ENCODE measurements at regions of chr17 and their contacts with region 1.

Region 1: DNA sequence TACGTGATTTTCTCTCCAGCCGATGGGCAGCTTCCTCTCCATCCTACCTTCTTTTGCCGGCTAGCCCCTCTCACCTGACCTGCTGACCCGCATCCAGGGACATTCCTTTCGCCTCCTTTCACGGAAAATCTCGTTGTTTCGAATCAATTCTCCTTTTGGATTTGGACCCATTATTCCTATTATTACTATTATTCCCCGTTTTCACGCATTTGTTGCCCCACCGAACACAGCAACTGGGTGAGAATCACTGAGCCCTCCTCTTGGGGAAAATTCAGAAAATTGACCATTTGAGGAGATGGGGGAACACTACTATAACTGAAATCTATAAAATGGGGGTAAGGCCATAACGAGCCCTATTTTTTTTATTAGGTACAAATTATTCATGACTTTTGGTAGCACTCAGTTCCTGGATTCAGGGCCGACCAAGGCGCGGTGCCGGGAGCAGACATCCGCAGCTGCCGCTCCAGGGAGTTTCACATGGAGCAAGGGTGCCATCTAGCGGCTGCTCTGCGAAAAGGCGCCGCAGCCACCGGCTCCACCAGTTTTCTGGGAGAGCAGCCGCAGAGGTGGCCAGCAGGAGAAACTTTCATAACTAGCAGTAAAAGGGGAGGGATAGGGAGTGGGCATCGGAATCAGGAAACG is 3.3 kb upstream of the HOXB8 start:
- DNase-seq: peak; percentile 91
- ATAC-seq: peak; percentile 69
- H3K4me3 Mint-ChIP-seq: no peak overlapping the region
- H3K27ac Mint-ChIP-seq: no peak overlapping the region
- H3K4me1 Mint-ChIP-seq: peaks cover 36% of the 10 kb centered on the region
- H3K27me3 Mint-ChIP-seq: peaks cover 82% of the 10 kb centered on the region

Region 2: DNA sequence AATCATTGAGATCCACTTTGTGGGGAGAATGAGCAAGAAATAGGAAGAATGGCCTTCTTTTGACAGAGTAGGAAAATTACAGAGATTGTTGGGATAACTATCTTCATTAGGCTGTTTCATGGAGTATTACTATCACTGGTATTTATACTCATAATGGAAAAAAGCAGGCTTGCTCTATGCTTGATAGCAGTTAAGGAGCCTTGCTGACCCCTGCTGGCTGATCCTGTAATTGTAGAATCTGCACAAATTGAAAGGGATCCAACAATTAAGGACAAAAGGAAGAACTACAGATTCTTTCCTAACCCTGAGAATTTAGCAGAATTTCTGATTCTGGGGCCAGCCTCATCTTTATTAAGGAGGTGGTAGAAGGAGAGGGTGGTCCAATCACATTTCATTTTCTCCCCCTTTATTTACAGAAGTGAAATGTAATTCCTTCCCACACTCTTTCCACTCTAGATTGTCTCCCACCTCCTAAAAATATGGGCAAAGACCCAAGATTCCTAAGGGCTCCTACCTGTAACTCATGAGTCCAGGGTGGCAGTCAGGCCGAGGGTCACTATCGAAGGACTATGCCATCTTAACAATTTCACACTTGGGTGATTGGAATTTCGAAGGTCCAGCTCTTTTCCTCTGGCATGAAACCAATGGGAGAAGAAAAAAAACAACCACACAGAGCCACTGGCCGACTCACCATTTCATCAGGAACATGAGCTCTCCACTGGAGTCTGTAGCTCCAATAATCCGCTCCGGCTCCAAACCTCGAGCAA is 543.9 kb before region 1 on chr17:
- CTCF ChIA-PET with region 1: no interaction called
- POLR2A ChIA-PET with region 1: no interaction called
- intact Hi-C with region 1: loop called in 1 of 2 experiments (anchors 2 kb)
- DNase-seq: peak; percentile 86
- ATAC-seq: peak; percentile 75
- H3K4me3 Mint-ChIP-seq: no peak overlapping the region
- H3K27ac Mint-ChIP-seq: no peak overlapping the region
- H3K4me1 Mint-ChIP-seq: no peaks in the 10 kb centered on the region
- H3K27me3 Mint-ChIP-seq: no peaks in the 10 kb centered on the region

Region 3: GRCh38 chr17:48131216-48131824 is 487.1 kb before region 1 on chr17:
- CTCF ChIA-PET with region 1: no interaction called
- POLR2A ChIA-PET with region 1: no interaction called
- intact Hi-C with region 1: loop called (anchors 5 to 10 kb)
- DNase-seq: peak; percentile 68
- ATAC-seq: peak; percentile 85
- H3K4me3 Mint-ChIP-seq: no peak overlapping the region
- H3K27ac Mint-ChIP-seq: peak overlapping the region; percentile 2
- H3K4me1 Mint-ChIP-seq: no peaks in the 10 kb centered on the region
- H3K27me3 Mint-ChIP-seq: no peaks in the 10 kb centered on the region

Region 4: GRCh38 chr17:48530208-48530886 is 88.0 kb before region 1 on chr17:
- CTCF ChIA-PET with region 1: no interaction called
- POLR2A ChIA-PET with region 1: no interaction called
- intact Hi-C with region 1: no loop called
- DNase-seq: no peak
- ATAC-seq: no peak
- H3K4me3 Mint-ChIP-seq: no peak overlapping the region
- H3K27ac Mint-ChIP-seq: no peak overlapping the region
- H3K4me1 Mint-ChIP-seq: no peaks in the 10 kb centered on the region
- H3K27me3 Mint-ChIP-seq: peaks cover 19% of the 10 kb centered on the region

Region 5: DNA sequence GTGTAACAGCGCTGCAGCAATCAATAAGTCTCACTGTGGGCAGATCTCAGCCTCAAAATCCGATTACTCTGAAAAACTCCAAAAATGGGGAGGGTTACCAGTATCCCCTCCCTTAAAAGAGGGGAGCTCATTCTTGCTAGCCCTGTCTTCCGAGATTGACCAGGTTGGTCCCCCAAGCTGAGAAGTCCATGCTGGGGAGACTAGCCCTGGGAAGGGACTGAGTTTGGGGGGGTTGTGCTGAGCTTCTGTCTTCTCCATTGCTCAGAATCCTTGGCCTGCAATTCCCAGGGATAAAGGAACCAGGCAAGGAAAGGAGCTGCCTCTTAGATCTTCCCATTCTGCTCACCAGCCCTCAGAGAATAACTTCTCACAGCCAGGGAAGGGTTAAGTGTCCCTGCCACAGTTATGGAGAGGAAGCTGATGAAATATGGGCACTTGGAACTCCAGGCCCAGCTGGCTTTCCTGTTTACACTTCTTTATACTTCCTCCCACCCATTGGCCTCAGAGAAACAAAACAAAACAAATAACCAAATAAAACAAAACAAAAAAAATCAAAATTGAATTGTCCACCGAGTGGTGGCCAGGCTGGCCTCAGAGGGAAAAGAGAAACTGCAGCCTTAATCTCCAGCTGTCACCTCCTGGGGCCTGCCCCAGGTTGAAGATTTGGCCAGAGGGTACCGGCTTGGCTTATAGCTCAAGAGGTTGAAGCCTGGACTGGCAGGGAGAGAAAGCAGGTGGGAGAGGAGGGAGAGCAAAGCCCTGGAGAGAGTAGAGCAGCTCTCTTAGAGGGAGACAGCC is 30.9 kb before region 1 on chr17:
- CTCF ChIA-PET with region 1: interaction called, 27 read pairs
- POLR2A ChIA-PET with region 1: no interaction called
- intact Hi-C with region 1: no loop called
- DNase-seq: no peak
- ATAC-seq: no peak
- H3K4me3 Mint-ChIP-seq: no peak overlapping the region
- H3K27ac Mint-ChIP-seq: no peak overlapping the region
- H3K4me1 Mint-ChIP-seq: peaks cover 30% of the 10 kb centered on the region
- H3K27me3 Mint-ChIP-seq: peaks cover 89% of the 10 kb centered on the region

Region 6: DNA sequence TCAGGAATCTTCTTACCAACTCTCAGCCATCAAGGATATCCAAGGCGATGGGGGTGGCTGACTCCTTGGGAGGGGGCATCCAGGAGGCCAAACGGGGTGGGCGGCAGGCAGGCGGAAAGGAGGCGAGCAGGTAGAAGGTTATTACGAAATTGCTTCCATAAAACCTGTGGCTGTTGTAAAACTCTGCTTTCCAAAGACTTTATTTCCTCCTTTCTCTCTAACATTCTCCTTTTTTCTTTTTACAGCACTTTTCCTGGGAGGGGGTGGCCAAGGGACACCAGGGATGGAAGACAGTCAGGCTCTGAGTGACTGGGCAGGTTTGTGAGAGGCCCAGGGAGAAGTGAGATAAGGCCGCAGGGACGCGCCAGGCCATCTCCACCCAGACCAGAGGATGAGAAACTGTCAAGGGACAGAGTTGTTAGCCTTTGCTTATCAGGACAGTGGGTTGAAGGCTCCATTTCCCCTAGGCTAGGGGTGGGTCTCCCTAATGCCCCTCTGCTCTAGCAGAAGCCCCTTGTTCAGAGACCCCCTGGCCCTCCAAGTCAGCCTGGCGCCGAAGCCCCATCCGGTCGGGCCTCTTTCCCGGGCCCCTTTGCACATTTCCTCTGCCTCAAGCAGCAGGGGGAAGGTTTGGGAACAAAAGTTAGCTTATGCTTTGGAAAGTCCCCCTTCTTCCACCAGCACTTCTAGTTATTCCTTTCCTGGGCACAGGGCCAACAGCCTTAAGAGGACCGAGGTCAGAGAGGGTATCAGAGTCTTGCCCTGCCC is 12.7 kb after region 1 on chr17:
- CTCF ChIA-PET with region 1: interaction called, 32 read pairs
- POLR2A ChIA-PET with region 1: no interaction called
- intact Hi-C with region 1: no loop called
- DNase-seq: no peak
- ATAC-seq: no peak
- H3K4me3 Mint-ChIP-seq: no peak overlapping the region
- H3K27ac Mint-ChIP-seq: no peak overlapping the region
- H3K4me1 Mint-ChIP-seq: peaks cover 6% of the 10 kb centered on the region
- H3K27me3 Mint-ChIP-seq: peaks cover 73% of the 10 kb centered on the region

Region 7: GRCh38 chr17:48753794-48754499 is 135.6 kb after region 1 on chr17:
- CTCF ChIA-PET with region 1: interaction called, 3 read pairs
- POLR2A ChIA-PET with region 1: no interaction called
- intact Hi-C with region 1: loop called in 1 of 2 experiments (anchors 5 kb)
- DNase-seq: no peak
- ATAC-seq: no peak
- H3K4me3 Mint-ChIP-seq: no peak overlapping the region
- H3K27ac Mint-ChIP-seq: no peak overlapping the region
- H3K4me1 Mint-ChIP-seq: peaks cover 8% of the 10 kb centered on the region
- H3K27me3 Mint-ChIP-seq: peaks cover 72% of the 10 kb centered on the region